Activated naive CD4-positive, alpha-beta T cell treated with anti-CD3 and anti-CD28 coated beads for 36 hours (primary cell): ENCODE measurements at regions of chr7 and their contacts with region 1.

Region 1: DNA sequence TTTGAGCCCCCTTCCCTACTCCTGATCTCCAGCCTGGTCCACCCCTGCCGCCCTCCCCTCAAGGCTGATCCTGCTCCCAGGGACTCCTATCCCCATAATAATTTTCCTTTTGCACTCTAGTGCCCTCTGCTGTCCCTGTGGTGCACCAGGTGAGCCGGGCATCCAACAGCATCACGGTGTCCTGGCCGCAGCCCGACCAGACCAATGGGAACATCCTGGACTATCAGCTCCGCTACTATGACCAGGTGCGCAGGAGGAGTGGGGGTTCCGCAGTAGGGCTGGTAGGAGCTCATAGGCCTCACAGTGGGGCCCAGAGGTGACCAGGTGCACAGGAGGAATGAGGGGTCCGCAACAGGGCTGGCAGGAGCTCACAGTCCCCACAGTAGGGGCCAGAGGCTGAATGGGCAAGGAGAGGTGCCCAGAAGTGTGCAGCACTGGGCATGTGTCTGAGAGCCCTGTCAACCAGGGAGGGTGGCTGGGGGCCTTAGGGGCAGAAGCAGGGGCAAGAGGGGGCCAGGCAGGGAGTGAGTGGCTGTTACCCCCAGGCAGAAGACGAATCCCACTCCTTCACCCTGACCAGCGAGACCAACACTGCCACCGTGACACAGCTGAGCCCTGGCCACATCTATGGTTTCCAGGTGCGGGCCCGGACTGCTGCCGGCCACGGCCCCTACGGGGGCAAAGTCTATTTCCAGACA is 11.6 kb downstream of the EPHB6 start:
- DNase-seq: peak; percentile 27
- H3K4me3 Mint-ChIP-seq: no peak overlapping the region
- H3K27ac Mint-ChIP-seq: peak overlapping the region; percentile 46
- H3K4me1 Mint-ChIP-seq: peaks cover 2% of the 10 kb centered on the region
- H3K27me3 Mint-ChIP-seq: no peaks in the 10 kb centered on the region

Region 2: DNA sequence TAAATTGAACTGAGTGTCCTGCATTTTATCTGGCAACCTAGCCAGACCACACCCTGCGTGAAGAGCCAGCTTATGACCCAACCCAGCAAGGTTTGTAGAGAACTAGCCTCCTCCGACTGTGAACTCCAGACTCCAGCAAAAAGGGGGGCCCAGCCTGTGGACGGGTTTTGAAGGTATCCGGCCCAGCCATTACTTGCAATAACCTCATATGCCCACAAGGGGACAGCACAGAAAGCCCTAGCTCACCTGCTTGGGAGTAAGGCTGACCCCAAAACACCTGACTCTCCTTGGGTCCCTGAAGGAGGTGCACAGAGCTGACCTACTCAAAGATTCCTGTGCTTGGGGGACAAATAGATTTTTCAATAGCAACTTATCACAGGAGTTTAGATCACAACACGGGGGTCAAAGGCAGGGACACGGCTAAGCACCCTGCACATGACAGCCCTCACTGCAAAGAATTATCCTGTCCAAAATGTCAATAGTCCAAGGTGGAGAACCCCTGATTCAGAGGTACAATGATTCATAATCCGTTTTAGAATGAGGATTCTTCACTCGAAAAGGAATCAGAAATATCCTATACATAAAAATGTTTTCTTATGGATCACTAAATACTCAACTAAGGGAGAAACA is 14.5 kb after region 1 on chr7:
- CTCF ChIA-PET with region 1: interaction called, 11 read pairs
- intact Hi-C with region 1: no loop called
- DNase-seq: peak; percentile 69
- H3K4me3 Mint-ChIP-seq: no peak overlapping the region
- H3K27ac Mint-ChIP-seq: no peak overlapping the region
- H3K4me1 Mint-ChIP-seq: peaks cover 1% of the 10 kb centered on the region
- H3K27me3 Mint-ChIP-seq: no peaks in the 10 kb centered on the region